PC-9 (cell line): ENCODE measurements at regions of chr2 and their contacts with region 1.

Region 1: DNA sequence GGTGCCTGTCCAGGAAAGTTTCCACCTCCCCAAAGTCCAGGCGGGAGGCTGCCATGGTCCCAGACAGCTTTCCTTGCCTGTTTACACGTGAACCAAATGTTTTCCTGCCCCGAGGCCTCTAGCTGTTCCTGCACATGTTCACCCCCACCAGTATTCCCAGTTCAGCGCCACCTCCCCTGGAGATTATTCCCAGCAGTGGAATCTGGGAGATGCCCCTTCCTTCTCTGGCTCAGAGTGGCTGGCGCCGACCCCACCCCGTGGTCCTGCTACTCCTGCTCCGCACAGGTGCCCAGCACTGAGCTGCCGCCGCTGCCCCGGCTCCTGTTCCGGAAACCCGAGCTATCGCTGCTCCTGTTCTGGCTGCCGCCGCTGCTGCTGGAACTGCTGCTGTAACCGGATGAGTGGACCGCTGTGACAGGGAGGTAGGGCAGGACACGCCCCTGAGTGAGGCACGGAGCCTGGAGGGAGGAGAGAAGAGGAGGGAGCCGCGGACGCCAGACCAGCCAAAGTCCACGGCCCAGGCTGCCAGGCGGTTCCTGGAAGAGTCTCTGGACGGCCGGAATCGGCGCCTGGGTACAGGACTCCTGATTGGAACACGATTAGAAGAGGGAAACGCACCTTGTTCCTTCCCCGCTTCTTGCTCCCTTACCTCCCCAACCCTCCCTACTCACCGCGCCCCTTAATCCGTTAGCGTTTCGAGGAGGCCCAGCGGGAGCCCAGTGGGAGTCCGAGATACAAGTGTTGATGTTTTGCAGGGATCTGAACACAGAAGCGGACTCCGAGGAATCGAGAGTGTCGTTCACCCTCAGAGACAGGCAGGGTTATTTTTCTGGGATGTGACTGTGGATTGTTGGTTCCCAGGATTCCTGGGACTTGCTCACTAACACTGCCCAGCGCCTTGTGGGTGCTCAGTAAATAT is at the start of gene PDE11A:
- DNase-seq: peak; percentile 85 to 94
- H3K4me3 ChIP-seq: peak within 1 kb of the TSS; percentile 64
- H3K27ac ChIP-seq: no peak within 1 kb of the TSS
- H3K4me1 ChIP-seq: peaks cover 27% of the 10 kb centered on the region
- H3K27me3 ChIP-seq: no peaks in the 10 kb centered on the region
- CTCF ChIP-seq: no peak
- total RNA-seq, gene PDE11A: 1.1 and 1.4 TPM in 2 replicates

Region 2: GRCh38 chr2:177772529-177772928 is 300.1 kb before region 1 on chr2:
- CTCF ChIA-PET with region 1: no interaction called
- POLR2A ChIA-PET with region 1: no interaction called
- intact Hi-C with region 1: loop called (anchors 10 kb)
- DNase-seq: no peak
- H3K4me3 ChIP-seq: no peak overlapping the region
- H3K27ac ChIP-seq: no peak overlapping the region
- H3K4me1 ChIP-seq: no peaks in the 10 kb centered on the region
- H3K27me3 ChIP-seq: no peaks in the 10 kb centered on the region
- CTCF ChIP-seq: peak; percentile 85

Region 3: GRCh38 chr2:178043266-178043665 is 29.4 kb before region 1 on chr2:
- CTCF ChIA-PET with region 1: interaction called, 12 read pairs
- POLR2A ChIA-PET with region 1: interaction called, 3 read pairs
- intact Hi-C with region 1: no loop called
- DNase-seq: no peak
- H3K4me3 ChIP-seq: no peak overlapping the region
- H3K27ac ChIP-seq: no peak overlapping the region
- H3K4me1 ChIP-seq: no peaks in the 10 kb centered on the region
- H3K27me3 ChIP-seq: no peaks in the 10 kb centered on the region
- CTCF ChIP-seq: no peak